Activated CD4-positive, alpha-beta T cell treated with anti-CD3 and anti-CD28 coated beads for 36 hours (primary cell): ENCODE measurements at regions of chr3 and their contacts with region 1.

Region 1: GRCh38 chr3:48400824-48401433 is 28.9 kb downstream of the FBXW12 start:
- DNase-seq: peak; percentile 76
- ATAC-seq: peak; percentile 84
- H3K4me3 Mint-ChIP-seq: no peak overlapping the region
- H3K27ac Mint-ChIP-seq: peak overlapping the region; percentile 31
- H3K4me1 Mint-ChIP-seq: no peaks in the 10 kb centered on the region
- H3K27me3 Mint-ChIP-seq: no peaks in the 10 kb centered on the region

Region 2: GRCh38 chr3:48142316-48142870 is 258.5 kb before region 1 on chr3:
- CTCF ChIA-PET with region 1: no interaction called
- POLR2A ChIA-PET with region 1: no interaction called
- intact Hi-C with region 1: no loop called
- DNase-seq: no peak
- ATAC-seq: no peak
- H3K4me3 Mint-ChIP-seq: no peak overlapping the region
- H3K27ac Mint-ChIP-seq: no peak overlapping the region
- H3K4me1 Mint-ChIP-seq: no peaks in the 10 kb centered on the region
- H3K27me3 Mint-ChIP-seq: no peaks in the 10 kb centered on the region

Region 3: GRCh38 chr3:48273594-48274211 is 127.2 kb before region 1 on chr3:
- CTCF ChIA-PET with region 1: interaction called, 12 read pairs
- POLR2A ChIA-PET with region 1: interaction called, 5 read pairs
- intact Hi-C with region 1: loop called (anchors 5 to 10 kb)
- DNase-seq: peak; percentile 68
- ATAC-seq: no peak
- H3K4me3 Mint-ChIP-seq: no peak overlapping the region
- H3K27ac Mint-ChIP-seq: no peak overlapping the region
- H3K4me1 Mint-ChIP-seq: peaks cover 22% of the 10 kb centered on the region
- H3K27me3 Mint-ChIP-seq: no peaks in the 10 kb centered on the region

Region 4: GRCh38 chr3:48429317-48429959 is 28.5 kb after region 1 on chr3:
- CTCF ChIA-PET with region 1: interaction called, 165 read pairs
- POLR2A ChIA-PET with region 1: no interaction called
- intact Hi-C with region 1: no loop called
- DNase-seq: peak; percentile 72
- ATAC-seq: peak; percentile 75
- H3K4me3 Mint-ChIP-seq: peak overlapping the region; percentile 69
- H3K27ac Mint-ChIP-seq: no peak overlapping the region
- H3K4me1 Mint-ChIP-seq: peaks cover 7% of the 10 kb centered on the region
- H3K27me3 Mint-ChIP-seq: peaks cover 5% of the 10 kb centered on the region

Region 5: GRCh38 chr3:48507351-48508061 is 106.6 kb after region 1 on chr3:
- CTCF ChIA-PET with region 1: interaction called, 9 read pairs
- POLR2A ChIA-PET with region 1: no interaction called
- intact Hi-C with region 1: loop called (anchors 1 to 2 kb)
- DNase-seq: peak; percentile 83
- ATAC-seq: peak; percentile 82
- H3K4me3 Mint-ChIP-seq: peak overlapping the region; percentile 28
- H3K27ac Mint-ChIP-seq: peak overlapping the region; percentile 80
- H3K4me1 Mint-ChIP-seq: peaks cover 45% of the 10 kb centered on the region
- H3K27me3 Mint-ChIP-seq: no peaks in the 10 kb centered on the region

Region 6: DNA sequence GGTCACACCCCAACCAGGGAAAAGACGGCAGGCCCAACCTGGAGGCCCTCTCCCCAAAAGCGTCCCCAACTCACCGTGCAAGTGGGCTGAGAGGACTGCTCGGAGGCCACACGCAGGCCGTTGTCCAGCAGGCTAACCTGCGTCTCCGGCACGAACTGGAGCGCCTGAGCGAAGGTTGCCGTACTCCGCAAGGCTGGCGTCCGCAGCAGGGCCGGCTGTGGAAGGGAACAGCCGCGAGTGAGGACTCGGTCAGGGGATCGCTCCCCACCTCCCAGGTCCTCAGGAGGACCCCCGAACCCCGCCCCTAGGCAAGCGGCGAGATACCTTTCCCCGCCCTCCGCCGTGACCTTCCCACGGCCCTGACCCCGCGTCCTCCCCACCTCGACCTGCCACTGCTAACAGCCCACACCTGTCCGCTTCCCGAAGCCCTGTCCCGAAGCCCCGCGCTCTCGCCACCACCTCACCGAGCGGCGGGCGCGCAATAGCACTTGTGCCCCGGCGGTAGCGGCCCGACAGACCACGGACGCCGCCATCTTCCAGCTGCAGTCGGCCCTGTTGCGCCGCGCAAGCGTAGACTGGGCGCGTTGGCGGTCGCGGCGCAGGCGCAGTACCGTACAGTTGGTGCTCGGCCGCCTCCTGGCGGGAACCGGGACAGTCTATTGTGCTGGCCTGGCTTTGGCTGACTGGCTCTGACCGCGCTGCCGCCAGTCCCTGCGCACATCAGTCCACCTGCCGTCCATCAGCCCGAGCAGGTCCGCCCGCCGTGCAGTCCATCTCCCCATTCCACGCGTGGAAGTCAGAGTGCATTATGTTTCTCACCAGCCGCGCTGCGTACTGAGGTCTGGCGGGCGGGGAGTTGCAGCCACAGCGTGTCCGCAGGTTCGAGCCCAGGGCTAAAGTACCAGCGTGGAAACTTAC is 208.4 kb after region 1 on chr3 and contains the start of gene UQCRC1:
- CTCF ChIA-PET with region 1: interaction called, 5 read pairs
- POLR2A ChIA-PET with region 1: no interaction called
- intact Hi-C with region 1: loop called in 1 of 2 experiments (anchors 1 kb)
- DNase-seq: peak; percentile 96
- ATAC-seq: peak; percentile 96
- H3K4me3 Mint-ChIP-seq: peak within 1 kb of the TSS; percentile 97
- H3K27ac Mint-ChIP-seq: peak within 1 kb of the TSS; percentile 95
- H3K4me1 Mint-ChIP-seq: peaks cover 27% of the 10 kb centered on the region
- H3K27me3 Mint-ChIP-seq: no peaks in the 10 kb centered on the region
- total RNA-seq, gene UQCRC1: 205 to 231 TPM

Region 7: DNA sequence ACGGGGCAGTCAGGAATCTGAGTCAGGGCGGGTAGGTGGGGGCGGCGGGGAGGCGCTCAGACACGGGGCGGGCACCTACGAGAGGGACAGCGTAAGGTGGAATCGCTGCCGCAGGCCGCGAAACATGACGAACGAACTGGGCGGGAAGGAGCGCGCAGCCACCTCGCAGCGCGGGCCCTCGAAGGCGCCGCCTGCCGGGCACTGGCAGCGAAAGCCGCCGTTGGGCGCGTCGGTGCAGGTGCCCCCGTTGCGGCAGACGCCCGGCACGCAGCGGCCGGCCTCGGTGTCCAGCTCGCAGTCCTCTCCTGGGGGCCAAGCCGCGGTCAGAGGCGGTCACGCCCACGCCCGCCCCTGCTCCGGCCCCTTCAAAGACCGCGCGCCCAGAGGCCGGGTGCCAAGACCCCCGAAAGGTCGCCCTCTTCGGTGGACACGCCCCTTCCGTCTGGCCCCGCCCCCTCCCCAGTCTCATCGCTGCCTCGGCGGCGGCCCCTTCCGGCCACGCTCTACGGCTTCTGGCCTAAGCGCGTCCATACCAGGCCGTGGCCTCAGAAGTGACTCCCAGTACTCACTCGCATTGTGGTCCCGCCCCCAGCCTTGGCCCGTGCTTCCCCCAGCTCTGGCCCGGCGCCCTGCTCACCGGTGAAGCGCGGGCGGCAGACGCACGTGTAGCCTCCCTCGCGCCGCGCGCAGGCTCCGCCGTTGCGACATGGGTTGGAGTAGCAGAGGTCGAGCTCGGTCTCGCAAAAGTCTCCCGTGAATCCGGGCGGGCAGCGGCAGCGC is 255.3 kb after region 1 on chr3:
- CTCF ChIA-PET with region 1: interaction called, 3 read pairs
- POLR2A ChIA-PET with region 1: no interaction called
- intact Hi-C with region 1: loop called in 1 of 2 experiments (anchors 1 kb)
- DNase-seq: peak; percentile 94
- ATAC-seq: peak; percentile 83
- H3K4me3 Mint-ChIP-seq: peak overlapping the region; percentile 71
- H3K27ac Mint-ChIP-seq: peak overlapping the region; percentile 87
- H3K4me1 Mint-ChIP-seq: peaks cover 6% of the 10 kb centered on the region
- H3K27me3 Mint-ChIP-seq: peaks cover 16% of the 10 kb centered on the region

Region 8: GRCh38 chr3:48739955-48740823 is 339.3 kb after region 1 on chr3:
- CTCF ChIA-PET with region 1: interaction called, 7 read pairs
- POLR2A ChIA-PET with region 1: no interaction called
- intact Hi-C with region 1: loop called in 1 of 2 experiments (anchors 1 kb)
- DNase-seq: peak; percentile 76
- ATAC-seq: peak; percentile 92
- H3K4me3 Mint-ChIP-seq: no peak overlapping the region
- H3K27ac Mint-ChIP-seq: no peak overlapping the region
- H3K4me1 Mint-ChIP-seq: no peaks in the 10 kb centered on the region
- H3K27me3 Mint-ChIP-seq: no peaks in the 10 kb centered on the region

Region 9: DNA sequence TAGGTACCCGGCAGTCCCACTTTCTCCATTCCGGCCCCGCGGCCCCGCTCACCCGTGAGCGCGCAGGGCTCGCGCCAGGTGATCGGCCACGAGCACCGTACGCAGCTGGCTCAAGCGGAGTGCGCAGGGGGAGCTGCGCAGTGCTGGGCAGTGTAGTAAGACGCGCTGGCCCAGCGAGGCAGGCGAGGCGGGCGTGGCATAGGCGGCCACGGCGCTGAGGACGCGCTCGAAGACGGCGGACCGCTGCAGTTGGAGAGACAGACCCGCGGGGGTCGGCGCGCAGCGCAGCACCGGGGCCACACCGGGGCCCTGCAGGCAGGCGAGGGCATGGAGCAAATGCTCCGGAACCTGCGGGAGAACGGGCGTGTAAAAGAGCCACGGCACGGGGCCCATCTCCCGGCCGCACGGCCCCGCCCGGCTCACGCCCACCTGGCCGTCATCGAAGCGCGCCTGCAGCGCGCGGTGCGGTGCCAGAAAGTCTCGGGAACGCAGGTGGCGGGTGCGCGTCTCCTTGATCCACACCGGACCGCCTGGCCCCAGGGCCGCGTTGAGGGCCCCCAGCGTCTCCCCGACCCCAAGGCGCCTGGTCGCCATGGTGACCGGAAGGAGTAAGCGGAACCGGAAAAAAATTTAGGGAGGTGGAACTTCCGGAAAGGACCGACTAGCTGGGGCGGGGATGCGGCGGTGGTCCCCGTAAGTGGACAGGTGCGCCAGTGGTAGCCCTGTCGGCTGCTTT is 617.2 kb after region 1 on chr3 and contains the start of gene DALRD3:
- CTCF ChIA-PET with region 1: no interaction called
- POLR2A ChIA-PET with region 1: no interaction called
- intact Hi-C with region 1: no loop called
- DNase-seq: peak; percentile 77
- ATAC-seq: no peak
- H3K4me3 Mint-ChIP-seq: peak within 1 kb of the TSS; percentile 95
- H3K27ac Mint-ChIP-seq: peak within 1 kb of the TSS; percentile 91
- H3K4me1 Mint-ChIP-seq: peaks cover 22% of the 10 kb centered on the region
- H3K27me3 Mint-ChIP-seq: no peaks in the 10 kb centered on the region
- total RNA-seq, gene DALRD3: 25.8 to 26.0 TPM